ENCODE measurements at regions of chr12 and their contacts with region 1.

Region 1: DNA sequence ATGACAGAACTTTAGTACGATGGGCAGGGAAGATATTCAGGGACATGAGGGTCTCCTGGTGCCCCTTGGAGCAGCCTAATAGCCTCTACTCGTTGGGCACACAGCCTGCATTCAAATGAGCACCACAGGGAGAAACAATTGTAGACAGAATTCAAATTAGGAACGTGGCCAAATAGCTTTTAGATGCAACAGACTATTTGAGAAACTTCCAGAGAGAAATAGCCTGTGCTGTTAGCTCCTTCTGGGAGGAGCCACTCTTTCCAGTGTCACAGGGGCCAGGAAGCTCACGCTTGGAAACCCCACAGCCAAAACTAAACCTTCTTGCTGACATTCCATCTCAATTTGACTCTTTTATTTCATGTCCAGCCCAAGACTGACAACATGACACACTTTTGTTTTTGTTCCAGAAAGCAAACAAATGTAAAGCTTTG is 114.5 kb downstream of the RPAP3 start:
- DNase-seq: no peak
- CTCF ChIP-seq: no peak

Region 2: GRCh38 chr12:47604221-47604873 is 13.0 kb after region 1 on chr12:
- CTCF ChIA-PET with region 1: interaction called, 10 read pairs
- POLR2A ChIA-PET with region 1: no interaction called
- DNase-seq: no peak
- CTCF ChIP-seq: no peak

Measured in GM10248 (cell line).